Ovary (tissue), 10 donors: ENCODE measurements at regions of chr4 and their contacts with region 1.

Region 1: GRCh38 chr4:53908661-53909078 is 155.7 kb downstream of the CHIC2 start:
- DNase-seq: peak in 3 of 5 donors; percentile 39 to 67 (median 56)
- H3K4me3 ChIP-seq: no peak overlapping the region
- H3K27ac ChIP-seq: peak overlapping the region in 1 of 2 donors; percentile 67
- H3K4me1 ChIP-seq: peaks cover 6% of the 10 kb centered on the region
- H3K27me3 ChIP-seq: no peaks in the 10 kb centered on the region
- CTCF ChIP-seq: peak; percentile 52 to 74 (median 72)
- EP300 ChIP-seq: no peak
- POLR2A ChIP-seq: no peak

Region 2: DNA sequence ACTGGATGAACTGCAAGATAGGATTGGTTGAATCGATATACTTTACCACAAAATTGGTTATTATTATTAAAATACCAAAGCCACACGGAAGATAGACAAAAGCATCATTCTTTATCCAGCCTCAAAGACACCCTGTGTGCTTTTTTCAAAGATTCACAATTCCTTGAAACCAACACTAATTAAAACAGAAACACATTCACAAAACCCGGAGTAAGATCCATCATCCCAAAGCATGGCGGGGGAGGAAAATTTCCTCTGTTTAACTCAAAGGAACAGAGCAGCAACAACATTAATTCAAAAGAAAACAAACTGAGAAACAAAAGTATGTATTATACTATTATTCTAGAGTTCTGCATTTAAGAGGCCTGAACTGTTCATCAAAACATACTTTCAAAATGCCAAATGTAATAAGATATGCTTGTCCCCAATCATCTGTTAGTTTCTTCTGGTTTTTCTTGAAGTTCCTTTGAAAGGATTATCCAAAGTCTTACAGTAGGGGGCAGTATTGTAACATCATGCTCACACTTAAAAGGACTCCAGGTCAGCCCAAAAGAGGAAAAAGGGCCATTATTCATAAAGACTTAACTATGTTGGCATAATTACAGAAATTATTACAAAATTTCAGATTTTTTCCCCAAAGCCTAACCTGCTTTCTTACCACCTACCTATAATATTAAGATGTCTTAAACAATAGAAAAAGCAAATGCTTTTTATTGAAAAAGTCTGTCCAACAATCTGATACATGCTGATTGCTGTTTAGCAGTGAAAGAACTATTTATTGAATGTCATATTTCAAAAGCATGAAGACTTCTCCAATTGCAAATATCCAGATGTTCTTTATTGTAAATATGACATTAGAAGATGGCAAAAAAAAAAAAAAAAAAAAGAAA is 711.5 kb before region 1 on chr4:
- intact Hi-C with region 1: loop called in 1 of 4 experiments (anchors 10 kb)
- DNase-seq: no peak
- H3K4me3 ChIP-seq: no peak overlapping the region
- H3K27ac ChIP-seq: no peak overlapping the region
- H3K4me1 ChIP-seq: no peaks in the 10 kb centered on the region
- H3K27me3 ChIP-seq: no peaks in the 10 kb centered on the region
- CTCF ChIP-seq: peak; percentile 50 to 83 (median 62)
- EP300 ChIP-seq: no peak
- POLR2A ChIP-seq: no peak

Region 3: GRCh38 chr4:53490965-53491622 is 417.6 kb before region 1 on chr4:
- intact Hi-C with region 1: loop called in 1 of 4 experiments (anchors 10 kb)
- DNase-seq: peak in 3 of 5 donors; percentile 46 to 79 (median 50)
- H3K4me3 ChIP-seq: no peak overlapping the region
- H3K27ac ChIP-seq: no peak overlapping the region
- H3K4me1 ChIP-seq: peaks cover 6% of the 10 kb centered on the region
- H3K27me3 ChIP-seq: no peaks in the 10 kb centered on the region
- CTCF ChIP-seq: peak; percentile 17 to 82 (median 52)
- EP300 ChIP-seq: no peak
- POLR2A ChIP-seq: no peak

Region 4: GRCh38 chr4:53702334-53703266 is 206.1 kb before region 1 on chr4:
- intact Hi-C with region 1: loop called in 1 of 4 experiments (anchors 5 kb)
- DNase-seq: peak; percentile 81 to 90 (median 87)
- H3K4me3 ChIP-seq: no peak overlapping the region
- H3K27ac ChIP-seq: peak overlapping the region in 1 of 2 donors; percentile 52
- H3K4me1 ChIP-seq: peaks cover 8% of the 10 kb centered on the region
- H3K27me3 ChIP-seq: no peaks in the 10 kb centered on the region
- CTCF ChIP-seq: no peak
- EP300 ChIP-seq: no peak
- POLR2A ChIP-seq: no peak

Region 5: GRCh38 chr4:53714236-53715140 is 194.2 kb before region 1 on chr4:
- intact Hi-C with region 1: loop called in 2 of 4 experiments (anchors 5 to 10 kb)
- DNase-seq: no peak
- H3K4me3 ChIP-seq: no peak overlapping the region
- H3K27ac ChIP-seq: no peak overlapping the region
- H3K4me1 ChIP-seq: peaks cover 11% of the 10 kb centered on the region
- H3K27me3 ChIP-seq: no peaks in the 10 kb centered on the region
- CTCF ChIP-seq: no peak
- EP300 ChIP-seq: no peak
- POLR2A ChIP-seq: no peak